ENCODE measurements at regions of chr14 and their contacts with region 1.

Region 1: GRCh38 chr14:20413045-20413799 is at the start of gene TEP1:
- DNase-seq: no peak
- H3K4me3 ChIP-seq: peak within 1 kb of the TSS; percentile 98
- CTCF ChIP-seq: no peak

Region 2: GRCh38 chr14:20332788-20333493 is 80.3 kb before region 1 on chr14 and contains the start of gene CCNB1IP1:
- CTCF ChIA-PET with region 1: interaction called, 11 read pairs
- POLR2A ChIA-PET with region 1: interaction called, 7 read pairs
- DNase-seq: peak; percentile 67
- H3K4me3 ChIP-seq: peak within 1 kb of the TSS; percentile 76
- CTCF ChIP-seq: no peak

Region 3: DNA sequence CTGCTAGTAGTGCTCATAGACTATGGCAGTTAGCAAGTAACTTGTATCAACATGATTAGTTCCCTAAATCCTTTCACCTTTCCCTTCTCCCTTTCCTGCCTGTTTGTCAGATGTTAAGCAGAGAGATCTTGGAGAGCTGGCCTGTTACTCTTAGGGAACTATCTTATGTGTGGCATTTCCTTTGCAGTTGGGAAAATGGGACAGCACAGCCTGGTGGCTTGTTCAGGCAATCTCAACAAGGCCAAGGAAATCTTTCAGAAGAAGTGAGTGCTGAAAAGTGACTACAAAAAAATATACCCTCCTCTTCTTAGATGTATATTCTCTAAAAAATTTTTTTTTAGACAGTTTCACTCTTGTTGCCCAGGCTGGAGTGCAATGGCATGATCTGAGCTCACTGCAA is 62.4 kb before region 1 on chr14:
- CTCF ChIA-PET with region 1: interaction called, 10 read pairs
- POLR2A ChIA-PET with region 1: interaction called, 3 read pairs
- DNase-seq: no peak
- H3K4me3 ChIP-seq: no peak overlapping the region
- CTCF ChIP-seq: peak; percentile 24

Region 4: DNA sequence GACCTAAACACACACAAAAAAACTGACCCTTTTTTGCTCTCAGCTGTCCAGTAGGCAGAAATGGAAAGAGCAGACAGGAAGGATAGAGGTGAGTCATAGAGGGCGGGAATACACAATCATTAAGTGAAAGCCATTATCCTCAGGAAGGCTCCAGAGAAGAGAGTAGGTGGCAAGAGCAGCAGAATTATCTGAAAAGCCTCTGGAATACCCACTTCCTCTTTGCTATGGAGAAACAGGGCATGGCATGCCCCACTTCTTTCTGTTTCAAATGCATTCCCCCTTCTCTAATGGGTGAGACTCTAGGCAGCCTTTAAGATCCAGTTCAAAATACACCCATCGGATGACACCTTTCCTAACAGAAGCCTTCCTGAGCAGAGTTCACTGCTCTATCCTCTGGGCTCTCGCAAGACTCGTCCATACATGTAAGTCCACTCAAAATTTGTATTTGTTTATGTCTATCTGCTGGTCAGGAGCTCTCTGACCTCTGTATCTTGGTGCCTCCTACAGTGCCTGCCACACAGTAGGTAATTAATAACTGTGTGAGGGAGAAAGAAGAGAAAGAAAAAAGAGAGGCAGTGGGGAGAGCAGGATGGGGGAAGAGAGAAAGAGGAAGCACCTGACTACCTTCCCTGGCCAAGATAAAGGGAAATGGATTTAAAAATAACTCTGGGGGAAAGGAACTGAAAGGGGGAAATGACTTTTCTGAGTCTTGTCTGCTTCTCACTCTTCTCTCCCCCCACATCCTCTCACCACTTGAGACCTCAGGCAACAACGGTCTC is 14.2 kb after region 1 on chr14:
- CTCF ChIA-PET with region 1: interaction called, 53 read pairs
- POLR2A ChIA-PET with region 1: interaction called, 6 read pairs
- DNase-seq: no peak
- H3K4me3 ChIP-seq: no peak overlapping the region
- CTCF ChIP-seq: no peak

Region 5: DNA sequence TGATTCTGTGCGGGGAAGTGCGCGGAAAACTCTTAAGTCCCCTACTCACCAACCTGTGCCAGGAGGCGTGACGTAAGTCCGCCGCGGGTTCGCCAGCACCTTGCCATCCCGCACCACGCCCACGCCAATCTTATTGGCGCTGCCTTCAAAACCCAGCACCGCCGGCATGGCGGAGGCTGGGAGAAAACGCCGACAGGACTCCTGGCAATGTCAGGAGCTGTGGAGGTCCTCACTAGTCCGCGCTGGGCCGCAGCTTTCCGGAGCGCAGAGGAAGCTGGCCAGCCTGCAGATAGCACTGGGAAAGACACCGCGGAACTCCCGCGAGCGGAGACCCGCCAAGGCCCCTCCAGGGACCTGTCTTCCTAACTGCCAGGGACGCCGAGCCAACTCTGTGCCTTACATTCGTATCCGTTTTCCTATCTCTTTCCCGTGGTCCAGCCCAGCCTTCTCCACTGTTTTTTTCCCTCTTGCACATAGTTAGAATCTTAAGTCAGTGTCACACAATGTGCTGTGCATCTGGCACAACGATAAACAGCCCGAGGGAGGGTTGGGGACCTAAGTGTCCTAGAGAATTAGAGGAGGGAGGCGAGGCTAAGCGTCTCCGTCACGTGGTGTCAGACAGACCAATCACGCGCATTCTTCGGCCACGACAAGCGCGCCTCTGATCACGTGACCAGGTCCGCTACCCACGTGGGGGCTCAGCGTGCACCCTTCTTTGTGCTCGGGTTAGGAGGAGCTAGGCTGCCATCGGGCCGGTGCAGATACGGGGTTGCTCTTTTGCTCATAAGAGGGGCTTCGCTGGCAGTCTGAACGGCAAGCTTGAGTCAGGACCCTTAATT is 41.5 kb after region 1 on chr14 and contains the starts of genes APEX1 and OSGEP:
- CTCF ChIA-PET with region 1: interaction called, 46 read pairs
- POLR2A ChIA-PET with region 1: interaction called, 12 read pairs
- DNase-seq: peak; percentile 90
- H3K4me3 ChIP-seq: peak within 1 kb of the TSS; percentile 96
- CTCF ChIP-seq: no peak

Region 6: GRCh38 chr14:20568393-20568792 is 155.2 kb after region 1 on chr14:
- CTCF ChIA-PET with region 1: no interaction called
- POLR2A ChIA-PET with region 1: no interaction called
- DNase-seq: no peak
- H3K4me3 ChIP-seq: no peak overlapping the region
- CTCF ChIP-seq: no peak

Measured in AG04449 (cell line).